ENCODE measurements at regions of chr17 and their contacts with region 1.

Region 1: DNA sequence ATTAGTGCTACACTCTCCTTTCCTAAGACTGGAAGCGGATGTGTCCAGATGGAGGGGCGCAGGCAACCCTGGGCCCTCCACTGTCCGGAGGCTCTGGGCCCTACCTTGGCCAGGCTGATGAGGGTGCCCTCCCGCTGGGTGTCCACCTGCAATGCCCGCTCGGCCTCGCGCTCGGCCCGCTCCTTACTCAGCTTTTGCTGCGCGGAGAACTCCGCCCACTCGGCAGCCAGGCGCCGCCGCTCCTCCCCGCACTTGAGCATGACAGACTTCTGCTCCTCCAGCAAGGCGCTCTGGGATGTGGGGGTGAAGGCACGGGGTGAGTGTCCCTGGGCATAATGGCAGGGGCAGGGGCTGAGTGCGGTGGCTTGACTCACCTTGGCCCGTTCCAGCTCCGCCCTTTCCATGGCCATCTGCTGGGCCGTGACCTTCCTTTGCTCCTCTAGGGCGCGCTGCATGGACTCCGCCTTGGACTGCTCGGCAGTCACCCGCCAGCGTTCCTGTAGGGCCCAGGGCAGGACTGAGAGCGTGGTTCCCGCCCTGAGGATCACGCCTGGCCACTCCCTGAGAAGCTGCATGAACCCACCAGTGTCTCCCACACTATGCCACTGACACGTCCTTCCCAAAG is 10.1 kb upstream of the MRPL38 start:
- DNase-seq: no peak
- H3K4me3 ChIP-seq: no peak overlapping the region
- H3K27ac ChIP-seq: no peak overlapping the region
- H3K4me1 ChIP-seq: no peaks in the 10 kb centered on the region
- H3K27me3 ChIP-seq: no peaks in the 10 kb centered on the region
- CTCF ChIP-seq: no peak
- POLR2A ChIP-seq: no peak

Region 2: DNA sequence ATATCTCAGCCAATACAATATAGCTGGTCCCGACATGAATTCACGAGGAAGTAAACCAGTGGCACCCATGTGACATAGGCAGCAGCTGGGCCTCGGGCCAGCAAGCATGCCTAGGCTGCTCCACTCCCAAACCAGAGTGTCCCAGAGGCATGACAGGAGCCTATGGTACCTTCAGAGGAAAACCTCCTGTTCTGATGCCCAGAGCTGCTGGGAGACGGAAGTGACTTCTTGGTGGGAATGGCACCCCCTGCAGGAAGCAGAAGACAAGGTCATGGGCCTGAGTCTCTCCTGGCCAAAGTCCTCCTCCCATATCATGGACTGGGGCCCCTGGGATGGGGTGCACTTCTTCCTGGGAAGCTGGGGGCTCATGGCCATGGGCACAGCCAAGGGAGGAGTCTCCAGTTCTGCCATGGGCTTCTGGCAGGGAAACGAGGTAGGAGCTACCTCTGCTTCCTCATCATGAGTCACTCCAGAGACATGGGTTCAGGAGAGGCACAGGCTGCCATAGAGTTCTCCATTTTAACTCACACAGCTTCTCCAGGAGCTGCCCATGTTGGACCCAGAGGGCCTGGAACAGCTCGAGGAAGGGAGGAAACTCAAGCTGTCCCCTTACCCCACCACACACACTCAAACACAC is 12.6 kb after region 1 on chr17:
- CTCF ChIA-PET with region 1: interaction called, 23 read pairs
- POLR2A ChIA-PET with region 1: no interaction called
- dilution Hi-C with region 1: no loop called
- intact Hi-C with region 1: no loop called
- DNase-seq: no peak
- H3K4me3 ChIP-seq: no peak overlapping the region
- H3K27ac ChIP-seq: no peak overlapping the region
- H3K4me1 ChIP-seq: no peaks in the 10 kb centered on the region
- H3K27me3 ChIP-seq: no peaks in the 10 kb centered on the region
- CTCF ChIP-seq: peak in 1 of 2 donors; percentile 39
- POLR2A ChIP-seq: no peak

Region 3: DNA sequence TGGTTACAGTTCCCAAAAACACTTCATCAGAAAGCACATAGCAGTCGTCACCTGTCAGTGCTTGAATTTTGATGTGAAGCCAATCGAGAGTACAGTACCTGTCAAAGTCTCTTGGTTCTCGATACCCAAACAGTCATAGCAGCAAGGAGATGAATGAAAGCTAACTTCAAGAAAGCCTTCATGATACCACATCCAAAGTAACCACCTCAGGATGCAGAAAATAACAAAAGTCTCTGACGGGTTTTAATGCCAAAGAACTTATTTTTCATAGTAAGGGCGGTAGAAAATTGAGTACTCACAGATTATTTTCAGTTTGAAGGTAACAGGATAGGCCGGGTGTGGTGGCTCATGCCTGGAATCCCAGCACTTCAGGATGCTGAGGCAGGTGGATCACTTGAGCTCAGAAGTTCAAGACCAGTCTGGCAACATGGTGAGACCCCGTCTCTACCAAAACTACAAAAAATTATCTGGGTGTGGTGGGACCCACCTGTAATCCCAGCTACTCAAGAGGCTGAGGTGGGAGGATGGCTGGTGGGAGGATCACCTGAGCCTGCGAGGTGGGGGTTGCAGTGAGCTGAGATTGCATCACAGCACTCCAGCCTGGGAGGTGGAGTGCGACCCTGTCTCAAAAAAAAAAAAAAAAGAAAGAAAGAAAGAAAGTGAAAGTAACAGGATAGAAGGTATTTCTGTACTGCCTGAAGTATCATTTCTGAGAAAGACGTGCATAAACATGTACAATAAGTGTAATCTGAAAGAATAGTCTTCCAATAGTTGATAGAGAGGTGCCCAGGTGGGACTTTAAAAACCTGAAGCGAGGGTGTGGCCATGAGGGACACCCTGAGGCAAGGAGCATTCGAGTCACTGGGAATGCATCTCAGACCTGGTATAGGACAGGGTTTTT is 838.6 kb after region 1 on chr17:
- CTCF ChIA-PET with region 1: no interaction called
- POLR2A ChIA-PET with region 1: no interaction called
- dilution Hi-C with region 1: no loop called
- intact Hi-C with region 1: no loop called
- DNase-seq: no peak
- H3K4me3 ChIP-seq: no peak overlapping the region
- H3K27ac ChIP-seq: no peak overlapping the region
- H3K4me1 ChIP-seq: no peaks in the 10 kb centered on the region
- H3K27me3 ChIP-seq: no peaks in the 10 kb centered on the region
- CTCF ChIP-seq: no peak
- POLR2A ChIP-seq: no peak